Motor neuron (in vitro differentiated cells): ENCODE measurements at regions of chr6 and their contacts with region 1.

Region 1: GRCh38 chr6:128731249-128732165 is 151.4 kb upstream of the LAMA2 start:
- ATAC-seq: peak in 5 of 8 experiments; percentile 39 to 78 (median 72)
- H3K4me3 ChIP-seq: no peak overlapping the region
- H3K27ac ChIP-seq: no peak overlapping the region
- H3K4me1 ChIP-seq: no peaks in the 10 kb centered on the region

Region 2: DNA sequence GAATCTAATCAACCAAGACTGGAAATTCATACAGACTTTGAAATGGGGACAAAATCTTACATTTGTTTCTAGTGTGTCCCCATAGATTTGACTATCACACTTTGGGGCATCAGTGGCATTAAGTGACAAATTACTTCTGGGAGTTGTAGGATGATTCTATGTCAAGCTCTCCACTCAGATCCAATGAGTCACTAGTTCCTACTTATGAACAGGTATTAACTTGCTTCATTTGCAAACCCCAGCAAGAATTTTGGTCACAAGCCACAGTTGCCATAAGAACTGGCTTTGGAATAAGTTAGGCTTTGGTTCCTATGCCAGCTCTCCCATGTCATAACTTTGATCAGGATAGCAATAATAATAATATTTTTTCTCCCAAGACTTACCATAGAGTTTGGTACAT is 133.6 kb before region 1 on chr6:
- in situ Hi-C with region 1: no loop called
- ATAC-seq: no peak
- H3K4me3 ChIP-seq: no peak overlapping the region
- H3K27ac ChIP-seq: no peak overlapping the region
- H3K4me1 ChIP-seq: peaks cover 6 to 14% of the 10 kb centered on the region in 2 donors

Region 3: DNA sequence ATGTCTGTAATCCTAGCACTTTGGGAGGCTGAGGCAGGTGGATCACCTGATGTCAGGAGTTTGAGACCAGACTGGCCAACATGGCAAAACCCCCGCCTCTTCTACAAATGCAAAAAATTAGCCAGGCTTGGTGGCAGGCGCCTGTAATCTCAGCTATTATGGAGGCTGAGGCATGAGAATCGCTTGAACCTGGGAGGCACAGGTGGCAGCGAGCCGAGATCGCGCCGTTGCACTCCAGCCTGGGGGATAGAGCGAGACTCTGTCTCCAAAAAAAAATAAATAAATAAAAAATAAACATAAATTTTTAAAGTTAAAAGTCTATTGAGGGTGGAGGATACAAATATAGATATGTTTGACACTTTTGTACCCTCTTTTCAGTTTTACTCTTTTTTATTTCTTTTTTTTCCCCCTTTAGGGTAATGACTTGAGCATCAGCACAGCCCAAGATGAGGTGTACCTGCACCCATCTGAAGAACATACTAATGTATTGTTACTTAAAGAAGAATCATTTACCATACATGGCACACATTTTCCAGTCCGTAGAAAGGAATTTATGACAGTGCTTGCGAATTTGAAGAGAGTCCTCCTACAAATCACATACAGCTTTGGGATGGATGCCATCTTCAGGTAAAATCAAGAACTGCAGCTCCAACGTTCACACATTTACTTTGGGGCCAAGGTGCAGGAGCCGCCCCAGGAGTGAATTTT is 520.3 kb after region 1 on chr6:
- in situ Hi-C with region 1: loop called in 1 of 9 experiments (anchors 25 kb)
- ATAC-seq: peak in 7 of 8 experiments; percentile 45 to 79 (median 53)
- H3K4me3 ChIP-seq: no peak overlapping the region
- H3K27ac ChIP-seq: no peak overlapping the region
- H3K4me1 ChIP-seq: peaks cover 8 to 18% of the 10 kb centered on the region in 2 donors